Transverse colon (tissue), 4 donors: ENCODE measurements at regions of chr9 and their contacts with region 1.

Region 1: DNA sequence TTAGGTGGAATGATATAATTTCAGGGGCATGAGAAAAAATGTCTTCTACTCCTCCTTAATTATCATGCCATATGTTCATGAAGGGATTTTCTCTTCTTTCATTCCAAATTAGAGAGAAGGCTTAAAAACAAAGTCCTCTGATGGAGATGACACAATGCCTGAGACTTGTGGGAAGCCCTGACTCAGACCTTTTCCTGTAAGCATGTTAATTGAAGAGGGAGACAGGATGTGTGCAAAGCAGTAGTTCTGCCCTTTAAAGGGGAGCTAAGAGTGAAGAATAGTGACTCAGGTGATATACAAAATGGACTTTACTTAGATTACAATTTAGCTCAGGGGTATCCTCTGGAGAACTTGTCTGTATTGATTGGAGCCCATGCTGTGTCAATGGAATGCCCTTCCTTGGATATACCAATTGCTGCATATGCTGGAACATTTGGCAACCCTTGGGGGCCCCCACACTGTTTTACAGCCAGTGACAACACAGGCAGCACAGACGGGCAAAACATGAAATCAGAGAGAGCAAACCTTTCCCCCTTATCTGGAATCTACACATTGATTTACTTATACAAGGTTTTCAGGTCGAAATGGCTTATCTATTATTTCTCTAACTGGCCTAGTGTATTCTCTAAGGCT is 81.3 kb downstream of the IZUMO3 start:
- DNase-seq: no peak
- H3K4me3 ChIP-seq: no peak overlapping the region
- H3K27ac ChIP-seq: no peak overlapping the region
- H3K4me1 ChIP-seq: no peaks in the 10 kb centered on the region
- H3K27me3 ChIP-seq: no peaks in the 10 kb centered on the region
- CTCF ChIP-seq: no peak
- EP300 ChIP-seq: no peak
- POLR2A ChIP-seq: no peak

Region 2: GRCh38 chr9:24552526-24553182 is 88.2 kb after region 1 on chr9:
- in situ Hi-C with region 1: loop called in 1 of 4 experiments (anchors 25 kb)
- intact Hi-C with region 1: no loop called
- DNase-seq: no peak
- H3K4me3 ChIP-seq: no peak overlapping the region
- H3K27ac ChIP-seq: no peak overlapping the region
- H3K4me1 ChIP-seq: peaks cover 0 to 9% (median 2%) of the 10 kb centered on the region in 4 donors
- H3K27me3 ChIP-seq: peaks cover 5% of the 10 kb centered on the region
- CTCF ChIP-seq: no peak
- EP300 ChIP-seq: no peak
- POLR2A ChIP-seq: no peak

Region 3: GRCh38 chr9:25261445-25261844 is 797.0 kb after region 1 on chr9:
- in situ Hi-C with region 1: no loop called
- intact Hi-C with region 1: no loop called
- DNase-seq: no peak
- H3K4me3 ChIP-seq: no peak overlapping the region
- H3K27ac ChIP-seq: no peak overlapping the region
- H3K4me1 ChIP-seq: no peaks in the 10 kb centered on the region
- H3K27me3 ChIP-seq: no peaks in the 10 kb centered on the region
- CTCF ChIP-seq: no peak
- EP300 ChIP-seq: no peak
- POLR2A ChIP-seq: no peak